H1 (cell line): ENCODE measurements at regions of chr4 and their contacts with region 1.

Region 1: GRCh38 chr4:138090150-138090917 is 151.8 kb downstream of the SLC7A11 start:
- DNase-seq: peak in 1 of 2 experiments; percentile 67
- H3K4me3 ChIP-seq: no peak overlapping the region
- H3K27ac ChIP-seq: no peak overlapping the region
- H3K4me1 ChIP-seq: no peaks in the 10 kb centered on the region
- H3K27me3 ChIP-seq: no peaks in the 10 kb centered on the region
- CTCF ChIP-seq: peak in 2 of 3 experiments; percentile 63 to 67; a peak in 3 of 4 replicates
- EP300 ChIP-seq: no peak
- POLR2A ChIP-seq: no peak
- RAD21 ChIP-seq: peak; percentile 81 to 82

Region 2: GRCh38 chr4:138035781-138036258 is 54.5 kb before region 1 on chr4:
- CTCF ChIA-PET with region 1: interaction called, 103 read pairs
- POLR2A ChIA-PET with region 1: no interaction called
- DNase-seq: no peak
- H3K4me3 ChIP-seq: no peak overlapping the region
- H3K27ac ChIP-seq: no peak overlapping the region
- H3K4me1 ChIP-seq: no peaks in the 10 kb centered on the region
- H3K27me3 ChIP-seq: no peaks in the 10 kb centered on the region
- CTCF ChIP-seq: peak in 2 of 3 experiments; percentile 61 to 77; a peak in 3 of 4 replicates
- EP300 ChIP-seq: no peak
- POLR2A ChIP-seq: no peak
- RAD21 ChIP-seq: peak; percentile 91 to 95

Region 3: DNA sequence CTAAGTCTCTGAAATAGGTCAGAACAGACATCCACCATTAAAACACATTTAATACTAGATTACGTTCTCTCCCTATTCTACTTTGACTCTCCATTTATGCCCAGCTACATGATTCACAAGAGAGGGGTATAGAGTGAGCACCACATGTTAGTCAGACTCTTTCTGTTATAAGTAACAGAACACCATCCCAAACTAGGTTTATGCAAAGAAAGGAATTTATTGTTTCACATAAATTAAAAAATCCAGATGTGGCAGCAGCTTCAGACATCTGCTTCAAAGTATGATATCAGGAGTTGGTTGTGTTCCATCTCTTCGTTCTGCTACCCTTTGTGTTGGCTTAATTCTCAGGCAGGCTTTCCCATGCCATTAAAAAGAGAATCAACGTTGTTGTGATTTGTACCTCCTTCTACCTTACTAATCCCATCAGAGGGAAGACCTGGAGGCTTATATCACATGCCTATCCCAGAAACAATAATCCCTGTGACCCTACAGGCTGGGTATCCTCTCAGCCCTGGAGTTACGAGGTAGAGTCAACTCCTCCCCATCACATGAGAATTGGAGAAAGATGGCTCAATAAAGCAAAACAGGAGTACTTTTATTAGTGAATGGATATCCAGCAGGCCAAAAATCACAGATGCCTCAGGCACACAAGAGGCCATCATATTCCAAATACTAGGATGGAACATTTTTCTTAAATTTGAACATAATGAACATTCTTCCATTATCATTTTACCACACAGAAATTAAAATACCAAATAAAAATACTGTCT is 11.4 kb before region 1 on chr4:
- CTCF ChIA-PET with region 1: interaction called, 21 read pairs
- POLR2A ChIA-PET with region 1: no interaction called
- DNase-seq: no peak
- H3K4me3 ChIP-seq: no peak overlapping the region
- H3K27ac ChIP-seq: no peak overlapping the region
- H3K4me1 ChIP-seq: no peaks in the 10 kb centered on the region
- H3K27me3 ChIP-seq: no peaks in the 10 kb centered on the region
- CTCF ChIP-seq: no peak
- EP300 ChIP-seq: no peak
- POLR2A ChIP-seq: no peak
- RAD21 ChIP-seq: no peak

Region 4: GRCh38 chr4:138111456-138112000 is 21.2 kb after region 1 on chr4:
- CTCF ChIA-PET with region 1: interaction called, 11 read pairs
- POLR2A ChIA-PET with region 1: interaction called, 6 read pairs
- DNase-seq: peak in 1 of 2 experiments; percentile 49
- H3K4me3 ChIP-seq: no peak overlapping the region
- H3K27ac ChIP-seq: no peak overlapping the region
- H3K4me1 ChIP-seq: peaks cover 2 to 17% (median 10%) of the 10 kb centered on the region in 4 experiments; a peak in 3 of 7 replicates
- H3K27me3 ChIP-seq: peaks cover 0 to 1% (median 0%) of the 10 kb centered on the region in 4 experiments; a peak in 1 of 7 replicates
- CTCF ChIP-seq: no peak
- EP300 ChIP-seq: no peak
- POLR2A ChIP-seq: no peak
- RAD21 ChIP-seq: no peak

Region 5: DNA sequence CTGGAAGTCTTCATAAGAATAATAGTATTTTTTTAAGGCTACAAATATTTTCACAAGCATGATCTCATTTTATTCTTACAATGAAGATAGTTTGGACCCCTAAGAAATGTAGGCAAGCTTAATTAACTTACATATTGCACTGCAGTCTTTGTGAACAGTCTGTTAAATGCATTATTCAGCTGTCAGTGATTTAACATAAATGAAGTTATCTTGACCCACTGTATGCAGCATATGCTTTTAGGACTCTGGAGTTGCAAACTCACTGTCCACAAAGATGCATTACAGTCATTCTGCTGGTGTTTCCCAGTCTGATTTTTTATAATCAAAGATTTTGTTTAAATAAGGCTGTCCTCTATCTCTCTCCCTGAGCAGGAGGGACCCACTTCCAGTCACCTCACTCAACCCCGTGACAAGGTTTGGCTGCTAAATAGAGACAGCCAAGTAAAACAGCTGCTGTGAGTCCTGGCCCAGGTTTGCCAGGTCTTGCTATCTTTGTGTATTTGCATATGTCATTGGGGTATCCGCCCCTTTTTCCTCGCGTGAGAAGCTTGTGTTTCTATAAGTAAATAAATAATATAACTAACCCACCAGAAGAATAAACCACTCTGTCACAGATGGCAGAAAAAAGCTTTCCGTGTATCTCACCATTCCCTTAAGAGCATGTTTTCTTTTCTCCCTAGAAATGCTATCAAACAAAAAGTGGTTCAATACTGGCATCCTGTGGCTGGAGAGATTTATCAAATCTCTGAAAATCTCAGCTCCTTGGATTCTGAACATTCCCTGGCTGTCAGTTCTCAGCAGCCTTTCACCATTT is 84.9 kb after region 1 on chr4:
- CTCF ChIA-PET with region 1: interaction called, 32 read pairs
- POLR2A ChIA-PET with region 1: no interaction called
- DNase-seq: no peak
- H3K4me3 ChIP-seq: no peak overlapping the region
- H3K27ac ChIP-seq: no peak overlapping the region
- H3K4me1 ChIP-seq: no peaks in the 10 kb centered on the region
- H3K27me3 ChIP-seq: no peaks in the 10 kb centered on the region
- CTCF ChIP-seq: no peak
- EP300 ChIP-seq: no peak
- POLR2A ChIP-seq: no peak
- RAD21 ChIP-seq: peak in 1 of 2 experiments; percentile 32; a peak in 2 of 4 replicates